ENCODE measurements at regions of chr2 and their contacts with region 1.

Region 1: GRCh38 chr2:197777823-197778407 is 7.2 kb downstream of the BOLL start:
- DNase-seq: peak; percentile 6
- H3K4me3 Mint-ChIP-seq: no peak overlapping the region
- H3K27ac Mint-ChIP-seq: no peak overlapping the region
- H3K4me1 Mint-ChIP-seq: no peaks in the 10 kb centered on the region
- H3K27me3 Mint-ChIP-seq: peaks cover 10% of the 10 kb centered on the region

Region 2: GRCh38 chr2:197453161-197453914 is 324.6 kb before region 1 on chr2 and contains the start of gene COQ10B:
- intact Hi-C with region 1: loop called (anchors 2 kb)
- DNase-seq: peak; percentile 99
- H3K4me3 Mint-ChIP-seq: peak within 1 kb of the TSS; percentile 99
- H3K27ac Mint-ChIP-seq: peak within 1 kb of the TSS; percentile 100
- H3K4me1 Mint-ChIP-seq: peaks cover 40% of the 10 kb centered on the region
- H3K27me3 Mint-ChIP-seq: no peaks in the 10 kb centered on the region
- total RNA-seq, gene COQ10B: 26.9 and 28.8 TPM in 2 replicates

Region 3: DNA sequence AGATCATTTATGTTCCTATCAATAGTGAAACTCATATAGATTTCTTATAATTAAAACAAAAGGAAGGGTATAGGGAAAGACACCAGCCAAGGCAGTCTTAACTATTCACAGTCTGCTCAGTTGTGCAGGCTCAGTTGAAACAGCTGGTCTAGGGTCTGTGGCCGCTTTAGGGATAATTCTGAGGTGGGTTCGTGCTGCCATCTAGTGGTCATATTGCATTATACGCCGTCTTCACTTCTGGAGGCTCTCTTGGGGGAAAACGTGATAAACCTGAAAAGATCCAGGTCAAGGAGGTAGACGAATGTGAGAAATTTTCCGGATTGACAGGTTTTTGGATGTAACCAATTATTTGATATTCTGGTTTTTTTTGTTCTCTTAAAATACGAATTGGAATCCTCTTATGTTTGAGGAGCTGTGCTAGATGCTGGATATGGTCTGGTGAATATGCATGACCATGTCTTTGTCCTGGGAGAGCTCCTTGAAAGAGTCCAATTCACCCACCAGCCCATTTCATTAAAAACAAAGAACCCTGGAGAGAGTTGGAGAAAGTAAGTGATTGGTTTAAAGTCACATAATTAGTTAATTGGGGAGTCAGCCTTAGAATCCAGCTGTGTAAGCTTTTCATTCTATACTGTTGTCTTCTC is 518.9 kb after region 1 on chr2:
- intact Hi-C with region 1: loop called (anchors 2 kb)
- DNase-seq: peak; percentile 20
- H3K4me3 Mint-ChIP-seq: no peak overlapping the region
- H3K27ac Mint-ChIP-seq: no peak overlapping the region
- H3K4me1 Mint-ChIP-seq: no peaks in the 10 kb centered on the region
- H3K27me3 Mint-ChIP-seq: peaks cover 20% of the 10 kb centered on the region

Measured in activated T-helper 1 cell treated with anti-CD3 and anti-CD28 coated beads, Interleukin-12 subunit alpha, Interleukin-12 subunit beta, Interleukin-2, Interleukin-4 antibody, amounts not matched to agents 30 ng/mL and 10 ng/mL and 1 ng/mL, durations not matched to agents 14 hours and 24 hours and 36 hours (primary cell).